Mucosa of descending colon (tissue), 3 donors: ENCODE measurements at regions of chr11 and their contacts with region 1.

Region 1: DNA sequence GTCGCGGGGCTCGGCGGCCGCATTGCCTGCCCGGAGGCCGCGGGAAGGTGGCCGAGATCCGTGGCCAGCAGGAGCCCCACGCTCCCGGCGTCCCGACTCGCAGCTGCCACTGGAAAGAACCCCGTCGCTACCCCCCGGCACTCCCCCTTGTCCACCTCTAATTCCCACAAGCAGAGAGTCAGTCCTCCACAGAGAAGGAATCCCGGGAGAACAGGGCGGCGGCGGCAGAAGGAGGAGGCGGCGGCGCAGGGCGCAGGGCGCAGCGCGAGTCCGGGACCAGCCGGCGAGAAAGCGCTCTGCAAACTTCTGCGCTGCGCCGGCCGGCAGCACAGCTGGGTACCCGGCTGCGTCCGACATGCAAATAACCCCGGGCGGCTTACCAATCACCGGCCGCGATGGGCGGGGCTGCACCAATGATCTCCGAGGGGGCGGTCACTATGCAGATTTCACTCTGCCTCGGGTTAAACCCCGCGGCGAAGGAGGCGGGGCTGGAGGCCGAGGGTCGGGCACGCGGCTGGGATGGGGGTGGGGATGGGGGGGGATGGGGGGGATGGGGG is at the start of gene ABTB2:
- DNase-seq: peak; percentile 99
- ATAC-seq: peak; percentile 91
- H3K4me3 ChIP-seq: peak within 1 kb of the TSS; percentile 31
- H3K4me1 ChIP-seq: peaks cover 16% of the 10 kb centered on the region
- CTCF ChIP-seq: no peak
- total RNA-seq, gene ABTB2: 12.8 to 16.8 (median 14.3) TPM

Region 2: DNA sequence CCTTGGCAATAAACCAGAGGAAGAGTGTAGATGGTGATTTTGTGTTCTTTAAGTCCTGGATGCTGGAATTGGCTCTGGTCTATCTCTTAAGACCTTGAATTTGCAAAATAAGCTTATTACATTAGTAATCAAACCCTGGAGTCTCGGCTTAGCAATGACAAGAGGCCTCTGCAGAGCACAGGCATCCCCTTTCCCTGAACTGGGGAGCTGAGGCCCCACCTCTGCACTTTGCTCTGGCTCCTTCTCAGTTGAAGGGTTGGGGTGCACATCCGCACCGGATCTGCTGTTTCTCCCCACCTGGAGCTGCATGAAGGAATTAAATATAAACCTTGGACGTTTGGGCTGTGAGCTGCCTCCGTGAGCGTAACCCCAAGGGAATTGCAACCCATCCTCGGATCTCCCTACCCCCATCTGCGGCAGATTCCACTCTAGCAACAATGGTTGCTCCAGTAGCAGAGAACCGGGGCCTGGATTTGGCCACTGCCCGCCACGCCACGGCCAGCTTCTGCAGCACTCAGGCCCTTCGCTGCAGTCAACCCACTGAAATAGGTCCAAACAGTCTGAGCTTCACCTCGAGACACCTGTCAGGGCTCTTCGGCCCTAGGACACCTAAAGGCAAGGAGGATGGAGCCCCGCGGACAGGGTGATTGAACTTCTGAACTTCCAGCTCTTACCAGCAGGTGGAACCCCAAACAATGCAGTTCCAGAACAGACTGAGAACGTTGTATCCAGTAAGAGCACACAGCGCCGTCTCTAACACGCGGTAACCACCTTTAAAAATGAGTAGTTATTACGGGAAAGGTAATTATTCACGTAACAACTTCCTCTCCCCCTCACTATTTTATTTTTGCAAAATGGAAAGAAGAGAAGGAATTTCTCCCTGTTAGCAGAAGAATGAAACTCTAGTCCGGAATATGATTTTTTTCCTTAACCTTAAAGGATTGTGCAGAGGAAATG is 361.0 kb before region 1 on chr11:
- intact Hi-C with region 1: loop called in 1 of 2 experiments (anchors 5 kb)
- DNase-seq: peak in 2 of 3 donors; percentile 71 to 91
- ATAC-seq: peak; percentile 99
- H3K4me3 ChIP-seq: no peak overlapping the region
- H3K4me1 ChIP-seq: peaks cover 8% of the 10 kb centered on the region
- CTCF ChIP-seq: peak; percentile 70

Region 3: DNA sequence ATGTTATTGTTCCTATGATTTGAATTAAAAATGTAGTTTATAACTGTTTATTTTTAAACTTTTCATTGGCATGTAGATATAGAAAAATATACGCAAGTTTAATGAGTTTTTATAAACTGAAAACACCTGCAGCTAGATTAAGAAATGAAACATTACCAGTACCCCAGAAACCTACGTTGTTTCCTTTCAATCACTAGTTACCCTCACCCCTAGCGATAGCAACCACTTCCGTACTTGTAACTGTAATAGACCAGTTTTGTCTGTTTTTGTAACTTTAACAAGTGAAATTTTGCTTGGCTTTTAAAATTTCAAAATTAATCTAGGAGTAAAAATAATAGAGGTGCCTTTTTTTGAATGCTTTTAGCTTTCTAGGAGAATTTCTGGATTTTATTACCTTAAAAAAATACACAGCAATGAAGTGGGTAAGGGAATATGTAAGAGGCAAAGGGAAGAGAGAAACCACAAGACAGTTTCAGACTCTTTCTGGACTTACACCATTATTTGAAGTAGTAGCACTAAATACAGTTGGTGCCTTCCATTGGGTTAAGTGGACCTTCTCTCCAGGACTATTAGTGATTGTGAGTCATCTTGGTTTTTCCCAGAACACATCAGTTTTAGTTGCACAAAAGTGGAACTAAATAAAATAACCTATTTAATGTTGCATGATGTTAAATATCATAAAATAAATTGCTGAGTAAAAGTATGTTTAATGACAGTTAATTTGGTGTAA is 271.1 kb before region 1 on chr11:
- intact Hi-C with region 1: no loop called
- DNase-seq: no peak
- ATAC-seq: no peak
- H3K4me3 ChIP-seq: no peak overlapping the region
- H3K4me1 ChIP-seq: no peaks in the 10 kb centered on the region
- CTCF ChIP-seq: no peak

Region 4: DNA sequence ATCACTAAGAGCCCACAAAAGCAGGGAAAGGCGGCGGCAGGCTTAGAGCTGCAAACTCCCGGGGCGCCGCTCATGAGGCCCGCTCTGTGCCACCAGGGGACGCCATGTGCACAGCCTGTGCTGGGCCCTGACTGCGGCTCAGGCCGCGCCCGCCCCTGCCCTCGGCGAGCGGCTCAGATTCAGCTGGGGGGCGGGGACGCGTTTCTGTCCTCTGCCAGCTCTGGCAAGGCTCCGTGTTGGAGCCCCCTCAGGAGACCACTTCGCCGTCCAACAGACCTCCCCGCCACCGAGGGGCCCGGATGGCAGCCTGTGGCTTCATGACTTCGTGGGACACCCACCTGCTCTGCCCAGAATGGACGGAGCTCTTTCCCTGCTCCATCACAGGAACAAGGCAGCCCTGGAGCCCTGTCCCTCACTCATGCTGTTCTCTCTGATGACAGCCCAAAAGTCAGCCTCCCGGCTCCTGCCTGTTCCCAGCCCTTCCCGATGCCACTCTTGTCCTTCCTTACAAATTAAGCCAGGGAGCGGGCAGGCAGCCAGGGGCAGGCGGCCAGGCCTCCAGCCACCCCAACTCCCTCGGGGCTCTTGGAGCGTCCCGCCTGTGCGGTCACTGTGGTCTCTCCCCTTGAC is 183.3 kb before region 1 on chr11:
- intact Hi-C with region 1: loop called (anchors 2 kb)
- DNase-seq: peak; percentile 83 to 93 (median 91)
- ATAC-seq: peak; percentile 98
- H3K4me3 ChIP-seq: no peak overlapping the region
- H3K4me1 ChIP-seq: no peaks in the 10 kb centered on the region
- CTCF ChIP-seq: peak; percentile 92